Natural killer cell (primary cell): ENCODE measurements at regions of chr1 and their contacts with region 1.

Region 1: GRCh38 chr1:84077476-84078107 is 66.5 kb upstream of the PRKACB start:
- DNase-seq: peak; percentile 79 to 82
- ATAC-seq: peak; percentile 91 to 97 (median 94)
- H3K4me3 ChIP-seq: peak overlapping the region; percentile 89
- H3K4me3 Mint-ChIP-seq: peak overlapping the region; percentile 93
- H3K27ac ChIP-seq: peak overlapping the region; percentile 67
- H3K27ac Mint-ChIP-seq: peak overlapping the region; percentile 78 to 85
- H3K4me1 ChIP-seq: peaks cover 11% of the 10 kb centered on the region
- H3K4me1 Mint-ChIP-seq: peaks cover 13 to 15% of the 10 kb centered on the region in 2 donors
- H3K27me3 ChIP-seq: no peaks in the 10 kb centered on the region
- H3K27me3 Mint-ChIP-seq: no peaks in the 10 kb centered on the region
- CTCF ChIP-seq: no peak

Region 2: GRCh38 chr1:84090447-84091245 is 13.1 kb after region 1 on chr1:
- intact Hi-C with region 1: loop called (anchors 1 kb)
- DNase-seq: peak in 1 of 2 donors; percentile 61
- ATAC-seq: peak; percentile 62 to 78 (median 74)
- H3K4me3 ChIP-seq: peak overlapping the region; percentile 30
- H3K4me3 Mint-ChIP-seq: peak overlapping the region; percentile 79
- H3K27ac ChIP-seq: peak overlapping the region; percentile 75
- H3K27ac Mint-ChIP-seq: peak overlapping the region; percentile 78 to 80
- H3K4me1 ChIP-seq: peaks cover 7% of the 10 kb centered on the region
- H3K4me1 Mint-ChIP-seq: peaks cover 18 to 19% of the 10 kb centered on the region in 2 donors
- H3K27me3 ChIP-seq: no peaks in the 10 kb centered on the region
- H3K27me3 Mint-ChIP-seq: no peaks in the 10 kb centered on the region
- CTCF ChIP-seq: no peak